Activated CD4-positive, alpha-beta T cell treated with anti-CD3 and anti-CD28 coated beads for 36 hours (primary cell): ENCODE measurements at regions of chr16 and their contacts with region 1.

Region 1: GRCh38 chr16:589658-590159 is at the start of gene RAB40C:
- DNase-seq: peak; percentile 100
- ATAC-seq: peak; percentile 88
- H3K4me3 Mint-ChIP-seq: peak within 1 kb of the TSS; percentile 79
- H3K27ac Mint-ChIP-seq: peak within 1 kb of the TSS; percentile 100
- H3K4me1 Mint-ChIP-seq: peaks cover 22% of the 10 kb centered on the region
- H3K27me3 Mint-ChIP-seq: no peaks in the 10 kb centered on the region
- total RNA-seq, gene RAB40C: 8.9 to 9.6 TPM

Region 2: GRCh38 chr16:234468-235305 is 355.0 kb before region 1 on chr16 and contains the start of gene FAM234A:
- CTCF ChIA-PET with region 1: no interaction called
- POLR2A ChIA-PET with region 1: no interaction called
- intact Hi-C with region 1: loop called in 1 of 2 experiments (anchors 1 kb)
- DNase-seq: peak; percentile 98
- ATAC-seq: peak; percentile 91
- H3K4me3 Mint-ChIP-seq: peak within 1 kb of the TSS; percentile 90
- H3K27ac Mint-ChIP-seq: peak within 1 kb of the TSS; percentile 96
- H3K4me1 Mint-ChIP-seq: peaks cover 17% of the 10 kb centered on the region
- H3K27me3 Mint-ChIP-seq: no peaks in the 10 kb centered on the region
- total RNA-seq, gene FAM234A: 11.3 to 15.2 TPM

Region 3: DNA sequence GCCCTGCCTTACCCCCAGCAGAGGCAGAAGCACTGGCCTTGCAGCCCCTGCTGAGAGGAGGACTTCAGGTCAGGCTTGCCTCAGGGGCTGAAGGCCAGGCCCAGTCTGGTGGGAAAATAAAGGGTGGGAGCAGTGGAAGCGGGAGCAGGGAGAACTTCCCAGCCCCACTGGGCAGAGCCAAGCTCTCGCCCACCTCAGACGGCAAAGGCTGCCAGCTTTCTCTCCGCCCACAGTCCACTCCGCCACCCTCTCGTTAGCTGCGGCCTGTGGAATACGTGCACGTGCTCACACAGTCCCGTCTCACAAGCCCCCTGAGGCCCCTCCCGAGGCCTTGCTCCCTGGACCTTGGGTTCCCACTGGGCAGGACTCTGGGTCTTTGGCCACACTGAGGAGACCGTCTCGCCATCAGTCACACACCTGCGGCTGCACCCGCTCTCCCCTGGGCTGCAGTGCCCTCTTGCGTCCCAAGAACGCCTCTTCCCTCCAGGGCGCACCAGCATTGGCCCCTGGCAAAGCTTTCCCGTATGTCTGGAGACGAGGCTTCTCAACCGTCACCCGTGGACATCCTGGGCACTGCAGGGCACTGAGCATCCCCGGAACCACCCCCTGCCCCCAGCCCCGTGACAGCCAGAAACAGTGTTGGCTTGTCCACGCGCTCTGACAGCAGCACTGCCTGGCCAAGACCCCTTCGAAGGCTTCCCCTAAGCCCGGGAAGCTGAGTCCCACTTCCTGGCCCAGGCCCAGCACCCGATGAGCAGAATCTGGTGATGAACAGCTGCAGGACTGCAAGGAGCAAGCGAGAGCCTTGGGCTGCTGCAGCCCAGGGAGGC is 227.6 kb before region 1 on chr16:
- CTCF ChIA-PET with region 1: no interaction called
- POLR2A ChIA-PET with region 1: no interaction called
- intact Hi-C with region 1: no loop called
- DNase-seq: peak; percentile 87
- ATAC-seq: peak; percentile 96
- H3K4me3 Mint-ChIP-seq: no peak overlapping the region
- H3K27ac Mint-ChIP-seq: no peak overlapping the region
- H3K4me1 Mint-ChIP-seq: peaks cover 5% of the 10 kb centered on the region
- H3K27me3 Mint-ChIP-seq: peaks cover 5% of the 10 kb centered on the region

Region 4: GRCh38 chr16:401468-402348 is 188.0 kb before region 1 on chr16 and contains the start of gene DECR2:
- CTCF ChIA-PET with region 1: interaction called, 3 read pairs
- POLR2A ChIA-PET with region 1: no interaction called
- intact Hi-C with region 1: loop called in 1 of 2 experiments (anchors 1 kb)
- DNase-seq: peak; percentile 100
- ATAC-seq: peak; percentile 87
- H3K4me3 Mint-ChIP-seq: peak within 1 kb of the TSS; percentile 82
- H3K27ac Mint-ChIP-seq: peak within 1 kb of the TSS; percentile 87
- H3K4me1 Mint-ChIP-seq: peaks cover 10% of the 10 kb centered on the region
- H3K27me3 Mint-ChIP-seq: no peaks in the 10 kb centered on the region
- total RNA-seq, gene DECR2: 11.5 to 13.0 TPM

Region 5: GRCh38 chr16:610513-611334 is 21.0 kb after region 1 on chr16:
- CTCF ChIA-PET with region 1: interaction called, 6 read pairs
- POLR2A ChIA-PET with region 1: no interaction called
- intact Hi-C with region 1: loop called in 1 of 2 experiments (anchors 1 kb)
- DNase-seq: peak; percentile 82
- ATAC-seq: peak; percentile 57
- H3K4me3 Mint-ChIP-seq: no peak overlapping the region
- H3K27ac Mint-ChIP-seq: peak overlapping the region; percentile 32
- H3K4me1 Mint-ChIP-seq: peaks cover 17% of the 10 kb centered on the region
- H3K27me3 Mint-ChIP-seq: no peaks in the 10 kb centered on the region

Region 6: GRCh38 chr16:684067-684794 is 94.5 kb after region 1 on chr16 and contains the start of gene JMJD8:
- CTCF ChIA-PET with region 1: no interaction called
- POLR2A ChIA-PET with region 1: no interaction called
- intact Hi-C with region 1: loop called in 1 of 2 experiments (anchors 1 kb)
- DNase-seq: peak; percentile 99
- ATAC-seq: peak; percentile 80
- H3K4me3 Mint-ChIP-seq: peak within 1 kb of the TSS; percentile 76
- H3K27ac Mint-ChIP-seq: peak within 1 kb of the TSS; percentile 58
- H3K4me1 Mint-ChIP-seq: peaks cover 40% of the 10 kb centered on the region
- H3K27me3 Mint-ChIP-seq: no peaks in the 10 kb centered on the region
- total RNA-seq, gene JMJD8: 26.1 to 31.4 TPM

Region 7: DNA sequence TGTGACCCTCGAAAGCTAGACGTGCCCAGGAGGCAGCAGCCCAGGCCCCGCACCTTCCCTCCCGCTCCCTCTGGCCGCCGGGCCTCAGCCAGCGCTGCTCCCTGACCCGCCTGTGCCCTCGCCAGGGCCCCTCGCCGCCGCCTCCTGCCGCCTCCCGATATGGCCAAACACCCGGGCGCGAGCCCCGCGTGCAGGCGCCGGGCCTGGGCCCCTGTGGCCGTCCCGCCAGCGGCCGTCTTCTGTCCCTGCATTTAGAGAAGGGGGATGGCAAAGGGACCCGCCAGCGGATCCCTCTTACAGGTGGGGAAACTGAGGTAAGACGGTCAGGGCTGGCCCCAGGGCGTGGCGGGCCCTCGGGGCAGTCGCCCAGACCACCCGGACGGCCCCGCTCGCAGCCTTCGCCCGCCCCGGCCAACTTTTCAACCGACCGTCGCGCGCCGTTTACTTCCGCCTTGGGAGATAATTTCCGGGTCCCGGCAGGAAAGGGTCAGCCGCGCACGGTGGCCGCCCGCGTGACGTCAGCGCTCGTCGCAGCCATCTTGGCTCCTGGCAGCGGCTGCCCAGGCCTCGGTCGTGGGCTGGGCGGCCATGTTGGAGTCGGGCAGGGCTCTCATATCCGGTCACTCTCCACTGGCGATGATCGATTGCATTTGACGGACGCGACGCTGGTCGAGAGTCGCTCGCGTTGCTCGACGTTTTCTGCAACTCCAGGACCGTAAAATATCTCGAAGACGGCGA is 217.8 kb after region 1 on chr16:
- CTCF ChIA-PET with region 1: no interaction called
- POLR2A ChIA-PET with region 1: no interaction called
- intact Hi-C with region 1: loop called in 1 of 2 experiments (anchors 1 kb)
- DNase-seq: peak; percentile 93
- ATAC-seq: peak; percentile 98
- H3K4me3 Mint-ChIP-seq: peak overlapping the region; percentile 96
- H3K27ac Mint-ChIP-seq: peak overlapping the region; percentile 95
- H3K4me1 Mint-ChIP-seq: peaks cover 8% of the 10 kb centered on the region
- H3K27me3 Mint-ChIP-seq: peaks cover 4% of the 10 kb centered on the region

Region 8: GRCh38 chr16:1069154-1069553 is 479.4 kb after region 1 on chr16:
- CTCF ChIA-PET with region 1: no interaction called
- POLR2A ChIA-PET with region 1: no interaction called
- intact Hi-C with region 1: no loop called
- DNase-seq: peak; percentile 39
- ATAC-seq: peak; percentile 57
- H3K4me3 Mint-ChIP-seq: no peak overlapping the region
- H3K27ac Mint-ChIP-seq: no peak overlapping the region
- H3K4me1 Mint-ChIP-seq: no peaks in the 10 kb centered on the region
- H3K27me3 Mint-ChIP-seq: peaks cover 27% of the 10 kb centered on the region